ENCODE measurements at regions of chr2 and their contacts with region 1.

Region 1: DNA sequence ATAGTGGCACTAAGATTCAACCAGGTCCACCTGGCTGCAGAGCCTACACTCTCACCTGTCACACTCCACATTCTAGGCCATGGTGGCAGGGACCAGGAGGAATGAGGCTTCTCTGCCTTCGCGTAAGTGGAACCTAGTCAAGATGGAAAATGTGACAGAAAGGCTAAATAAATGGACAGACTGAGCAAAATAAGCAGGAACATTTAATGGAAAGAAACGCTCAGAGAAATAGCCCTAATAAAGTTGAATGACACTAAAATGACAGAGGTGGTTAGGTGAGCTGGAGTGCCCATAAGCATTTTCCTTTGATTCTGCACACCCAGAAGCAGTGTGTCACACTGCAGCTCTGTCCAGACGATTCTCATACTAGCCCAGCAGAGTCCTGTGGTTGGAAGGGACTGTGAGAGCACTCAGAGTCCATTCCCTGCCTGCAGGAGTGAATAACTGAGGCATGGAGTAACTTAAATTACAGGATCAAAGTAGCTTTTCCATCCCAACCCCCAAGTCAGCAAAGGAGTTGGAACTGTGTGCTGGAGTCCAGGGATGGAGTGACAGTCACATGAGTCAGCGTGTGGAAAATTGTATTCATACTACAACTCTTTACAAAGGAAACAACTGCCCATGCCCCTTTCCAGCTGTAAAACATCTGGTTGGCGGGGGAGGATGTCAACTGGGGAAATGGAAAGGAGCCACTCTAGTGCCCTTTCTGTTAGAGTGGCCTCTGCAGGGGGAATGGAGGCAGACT is 105.4 kb upstream of the LGALSL start:
- DNase-seq: no peak
- H3K4me3 ChIP-seq: no peak overlapping the region
- H3K27ac ChIP-seq: no peak overlapping the region
- H3K4me1 ChIP-seq: peaks cover 0 to 3% (median 0%) of the 10 kb centered on the region in 4 donors
- H3K27me3 ChIP-seq: no peaks in the 10 kb centered on the region
- CTCF ChIP-seq: no peak

Region 2: GRCh38 chr2:64374686-64375085 is 26.1 kb after region 1 on chr2:
- intact Hi-C with region 1: no loop called
- DNase-seq: no peak
- H3K4me3 ChIP-seq: no peak overlapping the region
- H3K27ac ChIP-seq: no peak overlapping the region
- H3K4me1 ChIP-seq: peaks cover 0 to 6% (median 0%) of the 10 kb centered on the region in 4 donors
- H3K27me3 ChIP-seq: peaks cover 0 to 5% of the 10 kb centered on the region in 2 donors
- CTCF ChIP-seq: no peak

Region 3: DNA sequence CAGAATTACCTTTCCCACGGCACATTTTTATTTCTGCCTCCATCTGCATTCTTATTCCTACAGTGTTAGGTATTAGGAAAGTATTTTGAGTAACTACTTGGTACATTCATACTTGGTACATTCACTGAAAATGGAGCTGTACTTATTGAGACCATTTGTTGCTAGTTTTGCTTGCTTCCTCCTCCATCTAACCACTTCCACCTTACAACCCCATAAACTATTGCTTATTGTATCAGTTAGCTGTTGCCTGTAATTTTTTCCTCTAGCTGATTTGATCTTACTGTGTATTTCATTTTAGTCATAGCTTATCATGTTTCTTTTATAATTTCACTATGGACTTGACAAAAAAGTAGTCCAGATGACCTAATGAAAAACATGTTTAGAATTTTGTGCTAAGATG is 226.3 kb after region 1 on chr2:
- intact Hi-C with region 1: loop called (anchors 5 kb)
- DNase-seq: no peak
- H3K4me3 ChIP-seq: no peak overlapping the region
- H3K27ac ChIP-seq: no peak overlapping the region
- H3K4me1 ChIP-seq: no peaks in the 10 kb centered on the region
- H3K27me3 ChIP-seq: no peaks in the 10 kb centered on the region
- CTCF ChIP-seq: no peak